ENCODE measurements at regions of chr2 and their contacts with region 1.

Region 1: DNA sequence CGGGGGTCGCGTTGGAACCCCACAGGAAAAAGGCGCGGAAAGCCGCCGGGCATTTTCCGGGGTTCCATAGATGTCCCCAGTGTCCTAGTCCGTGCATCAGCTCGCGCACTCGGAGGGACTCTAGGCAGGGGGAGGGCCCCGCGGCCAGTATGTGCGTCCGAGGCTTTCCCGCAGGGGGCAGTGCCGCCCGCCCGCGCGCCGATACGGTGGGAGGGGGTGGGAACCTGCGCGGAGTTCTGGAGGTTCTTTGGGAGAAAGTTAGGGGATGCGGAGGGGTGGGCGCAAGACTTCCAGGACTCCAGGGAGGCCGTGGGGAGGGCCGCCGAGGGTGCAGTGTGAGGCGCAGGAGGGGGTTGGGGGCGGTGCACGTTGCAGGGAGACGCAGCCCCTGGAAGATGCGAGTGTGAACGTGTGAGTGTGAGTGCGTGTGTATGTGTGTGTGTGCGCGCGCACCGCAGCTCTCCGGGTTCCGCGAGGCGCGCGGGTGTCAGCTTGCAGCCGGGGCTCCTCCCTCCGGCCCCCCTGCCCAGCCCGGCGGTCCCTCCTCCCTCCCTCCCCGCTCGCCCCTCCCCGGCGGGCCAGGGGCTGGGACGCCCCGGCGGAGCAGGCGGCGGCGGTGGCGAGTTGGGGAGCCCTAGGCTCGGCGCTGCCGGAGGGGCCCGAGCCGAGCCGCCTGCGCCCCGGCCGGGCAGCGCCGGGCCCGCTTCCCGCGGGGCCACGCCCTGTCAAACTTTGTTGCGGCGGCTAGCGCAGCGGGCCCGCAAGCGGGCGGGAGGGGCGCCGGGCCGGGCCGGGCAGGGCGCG is at the start of gene TCF7L1:
- DNase-seq: peak; percentile 78
- ATAC-seq: peak; percentile 86
- H3K4me3 ChIP-seq: peak within 1 kb of the TSS; percentile 81
- H3K27ac ChIP-seq: no peak within 1 kb of the TSS
- H3K4me1 ChIP-seq: peaks cover 3% of the 10 kb centered on the region; the same call in 1 of the 2 replicates
- H3K27me3 ChIP-seq: no peaks in the 10 kb centered on the region
- CTCF ChIP-seq: peak; percentile 81
- total RNA-seq, gene TCF7L1: 1.8 and 2.8 TPM in 2 replicates

Region 2: DNA sequence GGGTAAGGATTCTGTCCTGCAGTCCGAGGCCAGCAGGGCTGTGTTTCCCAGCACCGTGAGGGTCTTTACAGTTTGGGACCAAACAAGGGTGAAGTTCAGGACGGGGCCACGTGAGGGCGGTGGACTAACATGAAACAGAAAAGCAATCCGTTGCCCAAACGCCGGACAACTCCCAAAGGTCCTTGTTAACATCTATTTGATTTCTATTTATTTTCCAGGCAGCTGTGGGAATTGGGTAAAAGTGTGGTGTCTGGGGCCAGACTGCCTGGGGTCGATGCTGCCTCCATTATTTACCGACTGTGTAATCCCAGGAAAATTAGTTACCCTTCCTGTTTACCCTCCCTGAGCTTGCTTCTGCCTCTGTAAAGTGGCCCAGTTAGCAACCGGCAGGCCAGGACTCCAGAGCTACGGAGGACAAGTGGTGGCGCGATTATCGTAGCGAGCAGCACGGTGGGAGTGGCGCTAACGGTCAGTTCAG is 66.1 kb before region 1 on chr2:
- CTCF ChIA-PET with region 1: interaction called, 3 read pairs
- POLR2A ChIA-PET with region 1: no interaction called
- intact Hi-C with region 1: loop called (anchors 2 kb)
- DNase-seq: peak; percentile 83
- ATAC-seq: peak; percentile 86
- H3K4me3 ChIP-seq: peak overlapping the region; percentile 57; the same call in 1 of the 2 replicates
- H3K27ac ChIP-seq: no peak overlapping the region
- H3K4me1 ChIP-seq: peaks cover 10% of the 10 kb centered on the region; the same call in 1 of the 2 replicates
- H3K27me3 ChIP-seq: no peaks in the 10 kb centered on the region
- CTCF ChIP-seq: peak; percentile 92

Region 3: DNA sequence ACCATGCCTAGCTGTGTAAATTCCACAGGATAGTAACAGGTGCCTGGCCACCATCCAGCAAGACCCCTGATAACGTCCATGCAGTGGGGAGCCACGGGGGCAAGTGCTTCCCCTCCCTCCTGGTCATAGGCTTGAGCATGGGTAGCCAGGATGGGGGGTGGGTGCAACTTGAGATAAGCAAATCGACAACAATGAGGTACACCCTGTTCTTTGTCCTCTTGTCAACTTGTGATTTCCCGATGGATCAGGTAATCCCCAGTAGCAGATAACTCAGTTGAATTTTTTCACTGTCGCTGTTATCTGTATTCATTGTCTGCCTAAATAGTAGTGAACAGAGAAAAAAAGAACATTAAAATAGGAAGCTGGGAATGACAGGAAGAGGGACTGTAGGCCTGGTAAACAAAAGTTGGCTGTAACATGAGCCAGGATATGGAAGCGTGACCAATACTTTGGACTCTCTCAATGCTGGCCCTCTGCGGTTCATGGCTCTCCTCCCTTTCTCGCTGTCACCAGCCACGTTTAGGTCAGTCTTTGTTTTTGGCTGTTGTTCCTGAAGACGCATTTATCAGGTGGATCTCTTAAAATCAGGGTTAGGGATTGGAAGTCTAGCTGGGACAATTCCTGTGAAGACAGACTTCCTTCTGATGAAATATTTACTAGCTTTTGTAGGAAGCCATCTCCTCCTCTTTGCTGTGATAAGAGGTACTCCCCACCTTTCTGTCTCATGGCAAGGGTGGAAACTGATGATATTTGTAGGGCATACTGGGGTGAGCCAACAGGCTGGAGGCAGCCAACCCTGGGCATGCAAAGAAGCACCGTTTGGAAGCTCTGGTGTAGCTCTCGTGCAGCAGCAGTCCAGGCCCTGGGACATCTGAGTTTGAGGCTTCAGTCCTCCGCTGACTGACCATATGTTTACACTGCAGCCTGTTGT is 42.6 kb after region 1 on chr2:
- CTCF ChIA-PET with region 1: no interaction called
- POLR2A ChIA-PET with region 1: interaction called, 3 read pairs
- intact Hi-C with region 1: loop called (anchors 5 kb)
- DNase-seq: peak; percentile 89
- ATAC-seq: peak; percentile 99
- H3K4me3 ChIP-seq: peak overlapping the region; percentile 21; the same call in 1 of the 2 replicates
- H3K27ac ChIP-seq: peak overlapping the region; percentile 23
- H3K4me1 ChIP-seq: peaks cover 27% of the 10 kb centered on the region
- H3K27me3 ChIP-seq: no peaks in the 10 kb centered on the region
- CTCF ChIP-seq: no peak

Region 4: GRCh38 chr2:85248773-85249509 is 115.9 kb after region 1 on chr2:
- CTCF ChIA-PET with region 1: interaction called, 4 read pairs
- POLR2A ChIA-PET with region 1: no interaction called
- intact Hi-C with region 1: loop called (anchors 1 kb)
- DNase-seq: peak; percentile 92
- ATAC-seq: peak; percentile 95
- H3K4me3 ChIP-seq: peak overlapping the region; percentile 40; the same call in 1 of the 2 replicates
- H3K27ac ChIP-seq: peak overlapping the region; percentile 76
- H3K4me1 ChIP-seq: peaks cover 20% of the 10 kb centered on the region
- H3K27me3 ChIP-seq: no peaks in the 10 kb centered on the region
- CTCF ChIP-seq: no peak

Region 5: GRCh38 chr2:85288244-85288725 is 155.2 kb after region 1 on chr2:
- CTCF ChIA-PET with region 1: interaction called, 3 read pairs
- POLR2A ChIA-PET with region 1: no interaction called
- intact Hi-C with region 1: loop called (anchors 1 kb)
- DNase-seq: peak; percentile 88
- ATAC-seq: peak; percentile 80
- H3K4me3 ChIP-seq: peak overlapping the region; percentile 14
- H3K27ac ChIP-seq: peak overlapping the region; percentile 71
- H3K4me1 ChIP-seq: peaks cover 27% of the 10 kb centered on the region
- H3K27me3 ChIP-seq: no peaks in the 10 kb centered on the region
- CTCF ChIP-seq: no peak

Region 6: GRCh38 chr2:85302121-85302520 is 169.1 kb after region 1 on chr2:
- CTCF ChIA-PET with region 1: no interaction called
- POLR2A ChIA-PET with region 1: no interaction called
- intact Hi-C with region 1: loop called (anchors 1 kb)
- DNase-seq: no peak
- ATAC-seq: no peak
- H3K4me3 ChIP-seq: no peak overlapping the region
- H3K27ac ChIP-seq: no peak overlapping the region
- H3K4me1 ChIP-seq: no peaks in the 10 kb centered on the region
- H3K27me3 ChIP-seq: no peaks in the 10 kb centered on the region
- CTCF ChIP-seq: no peak